K562 (cell line): ENCODE measurements at regions of chr9 and their contacts with region 1.

Region 1: GRCh38 chr9:113591001-113591898 is 127.7 kb downstream of the RGS3 start:
- DNase-seq: peak; percentile 75 to 83 (median 79)
- ATAC-seq: peak; percentile 87
- H3K4me3 ChIP-seq: no peak overlapping the region
- H3K27ac ChIP-seq: no peak overlapping the region
- H3K4me1 ChIP-seq: peaks cover 0 to 9% of the 10 kb centered on the region in 2 experiments; a peak in 3 of 5 replicates
- H3K27me3 ChIP-seq: peaks cover 0 to 4% of the 10 kb centered on the region in 2 experiments; a peak in 2 of 5 replicates
- CTCF ChIP-seq: peak; percentile 91 to 97 (median 96)
- EP300 ChIP-seq: no peak
- POLR2A ChIP-seq: no peak
- RAD21 ChIP-seq: peak; percentile 82 to 94

Region 2: DNA sequence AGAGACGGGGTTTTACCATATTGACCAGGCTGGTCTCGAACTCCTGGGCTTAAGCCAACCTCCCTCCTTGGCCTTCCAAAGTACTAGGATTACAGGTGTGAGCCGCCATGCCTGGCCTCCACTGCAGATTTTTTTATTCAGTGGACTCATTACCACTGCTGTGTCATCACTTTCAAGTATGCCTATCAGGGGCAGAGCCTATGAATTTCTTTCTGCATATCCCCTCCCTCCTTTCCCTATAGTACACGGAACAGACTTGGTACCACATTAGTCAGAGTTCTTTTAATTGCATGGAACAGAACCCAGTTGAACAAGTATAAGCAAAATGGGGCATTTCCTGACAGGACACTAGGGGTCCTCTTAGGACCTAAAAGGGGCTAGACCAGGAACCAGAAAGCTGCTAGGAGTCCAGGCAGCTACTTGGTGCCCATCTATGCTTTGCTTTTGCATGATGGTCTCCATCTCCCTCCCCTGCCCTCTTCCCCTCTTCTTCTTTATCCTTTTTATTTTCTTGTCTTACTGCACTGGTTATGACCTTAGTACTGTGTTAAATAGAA is 236.1 kb before region 1 on chr9:
- CTCF ChIA-PET with region 1: interaction called, 3 read pairs
- POLR2A ChIA-PET with region 1: no interaction called
- in situ Hi-C with region 1: no loop called
- intact Hi-C with region 1: loop called (anchors 1 kb)
- DNase-seq: peak in 2 of 4 experiments; percentile 61 to 68
- ATAC-seq: peak; percentile 89
- H3K4me3 ChIP-seq: no peak overlapping the region
- H3K27ac ChIP-seq: no peak overlapping the region
- H3K4me1 ChIP-seq: peaks cover 0 to 2% of the 10 kb centered on the region in 2 experiments; a peak in 2 of 5 replicates
- H3K27me3 ChIP-seq: peaks cover 2 to 13% of the 10 kb centered on the region in 2 experiments; a peak in 2 of 5 replicates
- CTCF ChIP-seq: peak; percentile 68 to 79 (median 73)
- EP300 ChIP-seq: no peak
- POLR2A ChIP-seq: no peak
- RAD21 ChIP-seq: peak; percentile 71 to 88

Region 3: DNA sequence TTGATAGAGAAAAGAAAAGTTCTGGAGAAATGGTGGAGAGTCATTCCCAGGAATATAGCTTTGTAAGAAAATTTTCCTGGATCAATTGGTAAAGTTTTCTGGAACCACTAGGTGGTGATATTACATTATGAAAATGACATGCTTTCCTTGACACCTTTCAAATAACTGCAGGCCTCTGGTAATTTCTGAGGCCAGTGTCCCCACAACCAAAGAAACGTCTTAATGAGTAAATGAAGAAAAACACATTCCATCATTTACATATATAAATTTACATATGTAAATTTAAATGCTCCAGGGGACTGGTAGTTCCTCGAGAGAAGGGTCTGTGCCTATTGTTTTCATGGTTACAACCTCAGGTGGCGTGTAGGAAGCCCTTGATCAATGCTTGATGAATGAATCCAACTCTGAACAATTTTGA is 144.9 kb before region 1 on chr9:
- CTCF ChIA-PET with region 1: interaction called, 43 read pairs
- POLR2A ChIA-PET with region 1: interaction called, 4 read pairs
- in situ Hi-C with region 1: loop called (anchors 5 kb)
- intact Hi-C with region 1: loop called (anchors 2 kb)
- DNase-seq: peak; percentile 31 to 52 (median 44)
- ATAC-seq: peak; percentile 74
- H3K4me3 ChIP-seq: no peak overlapping the region
- H3K27ac ChIP-seq: no peak overlapping the region
- H3K4me1 ChIP-seq: no peaks in the 10 kb centered on the region
- H3K27me3 ChIP-seq: no peaks in the 10 kb centered on the region; a peak in 1 of 5 replicates
- CTCF ChIP-seq: peak; percentile 40 to 83 (median 53); a peak in 4 of 6 replicates
- EP300 ChIP-seq: no peak
- POLR2A ChIP-seq: no peak
- RAD21 ChIP-seq: peak; percentile 95 to 96

Region 4: DNA sequence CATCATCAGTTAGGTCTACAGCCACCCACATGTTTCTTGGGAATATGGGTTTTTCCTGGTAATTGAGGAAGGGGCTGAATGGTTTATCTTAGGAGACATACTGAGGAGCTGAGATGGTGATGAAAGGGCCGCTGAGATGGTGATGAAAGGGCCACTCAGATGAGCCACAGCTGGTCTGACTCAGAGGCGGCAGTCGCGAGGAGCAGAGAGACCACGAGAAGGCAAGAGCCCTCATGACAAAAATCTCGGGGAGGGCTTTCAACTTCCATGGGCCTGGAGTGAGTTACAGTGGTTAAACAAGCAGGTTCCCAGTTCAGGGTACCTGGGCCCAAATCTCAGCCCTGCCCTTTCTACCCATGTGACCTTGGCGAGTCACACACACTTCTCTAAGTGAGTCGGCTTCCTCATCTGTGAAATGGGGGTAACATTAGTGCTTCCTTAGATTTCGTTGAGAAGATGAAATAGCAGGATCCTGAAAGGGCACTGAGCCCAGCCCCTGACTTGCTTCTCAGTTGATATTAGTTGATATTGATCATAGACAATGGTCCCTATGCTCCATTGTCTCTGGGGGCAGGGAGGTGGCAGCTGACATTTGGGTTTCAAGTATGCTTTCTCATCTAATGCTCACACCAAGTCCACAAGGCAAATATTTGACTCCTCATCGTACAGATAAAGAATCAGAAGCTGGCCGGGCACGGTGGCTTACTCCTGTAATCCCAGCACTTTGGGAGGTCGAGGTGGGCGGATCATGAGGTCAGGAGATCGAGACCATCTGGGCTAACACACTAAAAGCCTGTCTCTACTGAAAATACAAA is 41.7 kb after region 1 on chr9:
- CTCF ChIA-PET with region 1: no interaction called
- POLR2A ChIA-PET with region 1: no interaction called
- in situ Hi-C with region 1: no loop called
- intact Hi-C with region 1: no loop called
- DNase-seq: peak in 1 of 4 experiments; percentile 25
- ATAC-seq: no peak
- H3K4me3 ChIP-seq: no peak overlapping the region
- H3K27ac ChIP-seq: no peak overlapping the region
- H3K4me1 ChIP-seq: no peaks in the 10 kb centered on the region; a peak in 1 of 5 replicates
- H3K27me3 ChIP-seq: peaks cover 8 to 63% of the 10 kb centered on the region in 2 experiments
- CTCF ChIP-seq: no peak
- EP300 ChIP-seq: no peak
- POLR2A ChIP-seq: no peak
- RAD21 ChIP-seq: no peak

Region 5: GRCh38 chr9:113720495-113720894 is 129.2 kb after region 1 on chr9:
- CTCF ChIA-PET with region 1: no interaction called
- POLR2A ChIA-PET with region 1: no interaction called
- in situ Hi-C with region 1: no loop called
- intact Hi-C with region 1: no loop called
- DNase-seq: no peak
- ATAC-seq: no peak
- H3K4me3 ChIP-seq: no peak overlapping the region
- H3K27ac ChIP-seq: no peak overlapping the region
- H3K4me1 ChIP-seq: no peaks in the 10 kb centered on the region
- H3K27me3 ChIP-seq: peaks cover 0 to 6% of the 10 kb centered on the region in 2 experiments; a peak in 1 of 5 replicates
- CTCF ChIP-seq: no peak
- EP300 ChIP-seq: no peak
- POLR2A ChIP-seq: no peak
- RAD21 ChIP-seq: no peak